ENCODE measurements at regions of chr6 and their contacts with region 1.

Region 1: GRCh38 chr6:89080542-89081422 is at the start of gene PNRC1:
- DNase-seq: peak; percentile 100
- H3K4me3 ChIP-seq: peak within 1 kb of the TSS; percentile 86 to 96
- H3K27ac ChIP-seq: peak within 1 kb of the TSS; percentile 98 to 100
- H3K4me1 ChIP-seq: peaks cover 0 to 21% of the 10 kb centered on the region in 2 donors
- H3K27me3 ChIP-seq: no peaks in the 10 kb centered on the region
- CTCF ChIP-seq: no peak
- total RNA-seq, gene PNRC1: 196 TPM

Region 2: DNA sequence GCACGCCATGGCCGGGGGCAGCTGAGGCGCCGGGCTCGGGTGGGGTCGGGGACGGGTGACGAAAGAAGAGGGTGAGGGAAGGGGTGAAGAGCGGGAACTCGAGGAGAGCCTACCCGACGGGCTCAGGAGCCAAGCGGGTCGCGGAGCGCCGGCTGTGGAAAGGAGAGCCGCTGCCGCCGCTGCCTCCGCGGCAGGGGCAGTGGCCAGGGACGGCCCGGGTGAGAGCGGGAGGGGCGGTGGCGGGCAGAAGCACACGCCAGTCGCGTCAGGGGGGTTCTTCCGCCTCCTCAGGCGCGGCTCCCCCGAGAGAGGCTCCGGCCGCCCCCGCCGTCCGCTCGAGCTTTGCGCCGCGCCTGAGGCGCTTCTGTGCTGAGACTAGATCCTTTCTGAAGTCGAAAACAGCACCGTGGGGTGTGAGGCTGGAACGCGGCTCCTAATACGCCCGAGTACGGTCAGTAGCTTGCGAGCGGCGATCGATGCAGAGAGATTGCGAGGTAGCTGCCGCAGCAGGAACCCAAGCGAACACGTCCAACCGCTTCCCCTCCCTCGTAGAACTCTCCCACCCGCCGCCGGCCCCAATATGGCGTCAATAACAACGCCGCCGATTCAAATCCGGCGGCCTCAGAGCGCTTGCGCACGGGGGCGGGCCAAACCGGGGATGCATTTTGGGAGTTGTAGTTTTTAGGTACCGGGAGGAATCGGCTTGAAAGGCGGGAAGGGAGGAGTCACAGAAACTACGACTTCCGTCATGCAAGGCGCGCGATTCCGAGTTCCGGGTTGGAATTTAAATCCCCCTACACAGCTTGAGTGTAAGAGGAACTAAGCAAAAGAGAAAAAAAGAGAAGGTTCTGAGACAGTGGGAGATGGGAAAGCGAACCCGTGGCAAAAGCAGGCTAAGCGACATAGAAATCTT is 1378.8 kb before region 1 on chr6 and contains the start of gene AKIRIN2:
- intact Hi-C with region 1: loop called (anchors 2 kb)
- DNase-seq: peak; percentile 92 to 98
- H3K4me3 ChIP-seq: peak within 1 kb of the TSS; percentile 92 to 97
- H3K27ac ChIP-seq: peak within 1 kb of the TSS; percentile 96 to 99
- H3K4me1 ChIP-seq: peaks cover 0 to 7% of the 10 kb centered on the region in 2 donors
- H3K27me3 ChIP-seq: no peaks in the 10 kb centered on the region
- CTCF ChIP-seq: no peak
- total RNA-seq, gene AKIRIN2: 39.1 TPM

Region 3: DNA sequence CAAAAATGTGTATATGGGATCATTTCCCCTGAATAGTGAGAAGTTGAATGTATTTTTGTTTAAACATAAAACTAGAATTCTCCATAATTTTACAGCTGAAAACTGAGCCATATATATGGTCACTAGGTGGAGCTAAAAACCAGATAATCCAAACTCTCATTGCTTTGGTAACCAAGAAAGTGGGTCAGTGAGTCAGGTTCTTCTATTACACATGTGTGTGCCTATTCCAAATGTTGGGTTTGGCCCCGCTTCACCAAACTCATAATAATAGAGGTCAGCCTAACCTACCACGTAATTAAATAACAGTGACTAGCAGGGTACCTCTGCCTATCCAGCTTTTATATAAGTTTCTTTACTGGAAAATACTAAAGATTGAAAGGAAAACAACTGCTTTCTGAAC is 98.1 kb before region 1 on chr6:
- intact Hi-C with region 1: loop called (anchors 2 kb)
- DNase-seq: peak; percentile 43 to 91
- H3K4me3 ChIP-seq: peak overlapping the region; percentile 15 to 33
- H3K27ac ChIP-seq: no peak overlapping the region
- H3K4me1 ChIP-seq: peaks cover 4 to 7% of the 10 kb centered on the region in 2 donors
- H3K27me3 ChIP-seq: no peaks in the 10 kb centered on the region
- CTCF ChIP-seq: peak; percentile 53 to 74 (median 64)

Region 4: GRCh38 chr6:89035252-89036106 is 45.3 kb before region 1 on chr6:
- intact Hi-C with region 1: loop called (anchors 1 kb)
- DNase-seq: peak; percentile 78 to 95
- H3K4me3 ChIP-seq: peak overlapping the region; percentile 1 to 15
- H3K27ac ChIP-seq: peak overlapping the region; percentile 86 to 87
- H3K4me1 ChIP-seq: peaks cover 4 to 17% of the 10 kb centered on the region in 2 donors
- H3K27me3 ChIP-seq: no peaks in the 10 kb centered on the region
- CTCF ChIP-seq: no peak

Region 5: GRCh38 chr6:89145787-89146646 is 65.2 kb after region 1 on chr6 and contains the start of gene PM20D2:
- intact Hi-C with region 1: loop called (anchors 2 kb)
- DNase-seq: peak in 1 of 2 donors; percentile 82
- H3K4me3 ChIP-seq: peak within 1 kb of the TSS; percentile 86 to 97
- H3K27ac ChIP-seq: peak within 1 kb of the TSS; percentile 92 to 98
- H3K4me1 ChIP-seq: peaks cover 0 to 11% of the 10 kb centered on the region in 2 donors
- H3K27me3 ChIP-seq: no peaks in the 10 kb centered on the region
- CTCF ChIP-seq: no peak
- total RNA-seq, gene PM20D2: 8.8 TPM

Region 6: GRCh38 chr6:89352278-89353117 is 271.7 kb after region 1 on chr6 and contains the start of gene UBE2J1:
- intact Hi-C with region 1: loop called (anchors 5 kb)
- DNase-seq: peak; percentile 88 to 98
- H3K4me3 ChIP-seq: peak within 1 kb of the TSS; percentile 58 to 97
- H3K27ac ChIP-seq: peak within 1 kb of the TSS; percentile 99 to 100
- H3K4me1 ChIP-seq: peaks cover 3 to 19% of the 10 kb centered on the region in 2 donors
- H3K27me3 ChIP-seq: no peaks in the 10 kb centered on the region
- CTCF ChIP-seq: no peak
- total RNA-seq, gene UBE2J1: 29.5 TPM

Measured in ascending aorta (tissue), 2 donors.